ENCODE measurements at regions of chr2 and their contacts with region 1.

Region 1: DNA sequence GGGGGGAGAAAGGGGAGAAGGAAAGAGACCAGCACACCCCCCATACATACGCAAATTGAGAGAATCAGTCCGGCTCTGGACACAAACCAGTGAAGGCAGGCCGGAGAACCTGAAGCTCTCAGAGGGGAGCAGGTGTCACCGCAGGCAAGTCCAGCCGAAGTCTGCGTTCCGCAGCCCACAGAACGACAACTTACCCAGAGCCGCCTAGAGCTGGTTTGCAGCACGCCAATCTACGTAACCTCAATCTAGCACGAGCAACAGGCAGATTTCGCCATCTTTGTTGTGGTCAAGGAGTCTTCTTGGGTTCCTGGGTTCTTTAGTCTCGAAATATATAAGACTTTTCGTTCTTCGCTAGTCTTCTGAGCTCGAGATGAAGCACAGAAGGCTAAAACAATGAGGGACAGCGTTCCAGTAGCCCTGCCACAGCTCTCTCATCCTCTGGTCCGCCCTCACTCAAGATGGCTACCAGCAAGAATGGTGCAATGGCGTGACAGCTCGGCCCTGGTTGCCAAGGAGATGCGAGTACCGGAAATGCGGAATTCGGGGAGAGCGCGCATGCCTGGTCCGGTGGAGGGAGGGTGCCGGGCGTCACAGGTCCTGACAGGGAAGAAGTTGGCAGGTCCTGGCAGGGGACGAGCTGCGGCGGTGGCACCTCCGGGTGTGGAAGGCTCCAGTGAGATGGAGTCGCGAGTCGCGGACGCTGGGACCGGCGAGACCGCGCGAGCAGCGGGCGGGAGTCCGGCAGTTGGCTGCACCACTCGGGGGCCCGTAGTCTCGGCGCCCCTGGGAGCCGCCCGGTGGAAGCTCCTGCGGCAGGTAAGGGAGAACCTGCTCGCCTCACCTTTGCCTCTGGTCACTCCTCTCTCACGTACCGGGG is at the starts of genes CAMKMT and PREPL:
- DNase-seq: peak; percentile 98 to 99
- ATAC-seq: peak; percentile 94 to 95
- H3K4me3 ChIP-seq: peak within 1 kb of the TSS; percentile 64 to 96 (median 86)
- H3K27ac ChIP-seq: peak within 1 kb of the TSS; percentile 93 to 96 (median 94)
- H3K4me1 ChIP-seq: peaks cover 44 to 47% of the 10 kb centered on the region in 2 donors
- H3K27me3 ChIP-seq: no peaks in the 10 kb centered on the region
- CTCF ChIP-seq: no peak
- POLR2A ChIP-seq: peak; percentile 73 to 87
- total RNA-seq, gene CAMKMT: 2.6 to 9.5 (median 5.2) TPM
- total RNA-seq, gene PREPL: 27.3 to 60.0 (median 52.3) TPM

Region 2: DNA sequence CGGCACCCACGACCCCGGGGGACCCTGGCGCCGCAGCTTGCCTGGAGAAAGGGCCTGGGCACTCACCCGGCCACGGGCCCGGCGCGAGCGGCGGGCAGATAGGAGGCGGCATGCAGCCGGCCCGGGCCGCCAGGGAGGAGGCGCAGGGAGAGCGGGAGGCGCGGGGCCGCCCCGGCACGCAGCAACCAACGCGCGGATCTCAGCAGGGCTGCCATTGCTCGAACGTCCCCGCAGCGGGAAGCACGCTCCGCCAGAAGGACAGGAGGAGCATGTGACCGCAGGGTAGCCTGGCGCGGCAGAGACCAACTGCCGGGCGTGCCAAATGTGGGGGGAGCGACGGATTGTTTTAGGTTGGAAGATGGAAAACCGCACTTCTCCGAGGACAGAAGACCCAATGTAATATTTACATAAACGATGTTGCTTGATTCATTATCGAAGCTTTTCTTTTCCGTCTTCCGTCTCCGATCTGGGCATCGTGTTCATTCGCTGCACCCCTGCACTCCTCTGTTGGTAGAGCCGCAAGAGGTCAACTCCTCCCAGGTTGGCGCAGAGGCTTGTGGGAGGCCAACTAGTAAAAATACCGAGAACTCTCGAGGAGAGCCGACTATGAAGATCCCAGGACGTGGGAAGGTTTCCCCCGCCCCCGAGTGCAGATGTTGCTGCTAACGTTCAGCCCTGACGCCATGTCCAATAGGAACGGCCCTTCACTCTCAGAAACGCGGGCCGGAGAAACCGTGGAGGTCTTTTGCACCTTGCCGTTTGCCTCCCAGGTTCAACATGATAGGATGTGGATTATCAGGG is 365.6 kb before region 1 on chr2 and contains the start of gene LRPPRC:
- in situ Hi-C with region 1: no loop called
- intact Hi-C with region 1: loop called (anchors 2 kb)
- DNase-seq: peak; percentile 95
- ATAC-seq: peak; percentile 99
- H3K4me3 ChIP-seq: peak within 1 kb of the TSS; percentile 78 to 99 (median 96)
- H3K27ac ChIP-seq: peak within 1 kb of the TSS; percentile 74 to 97 (median 92)
- H3K4me1 ChIP-seq: peaks cover 22 to 35% of the 10 kb centered on the region in 2 donors
- H3K27me3 ChIP-seq: no peaks in the 10 kb centered on the region
- CTCF ChIP-seq: peak in 1 of 5 experiments; percentile 22
- POLR2A ChIP-seq: peak; percentile 77 to 94
- total RNA-seq, gene LRPPRC: 75.9 to 95.3 (median 81.5) TPM

Region 3: GRCh38 chr2:44075541-44075940 is 286.0 kb before region 1 on chr2:
- in situ Hi-C with region 1: no loop called
- intact Hi-C with region 1: no loop called
- DNase-seq: peak; percentile 75 to 93
- ATAC-seq: peak; percentile 98 to 99
- H3K4me3 ChIP-seq: no peak overlapping the region
- H3K27ac ChIP-seq: peak overlapping the region; percentile 86 to 95 (median 90)
- H3K4me1 ChIP-seq: peaks cover 13 to 19% of the 10 kb centered on the region in 2 donors
- H3K27me3 ChIP-seq: no peaks in the 10 kb centered on the region
- CTCF ChIP-seq: no peak
- POLR2A ChIP-seq: peak in 1 of 2 donors; percentile 25

Measured in gastrocnemius medialis (tissue), 4 donors.